ENCODE measurements at regions of chr2 and their contacts with region 1.

Region 1: GRCh38 chr2:21042958-21043743 is 722 bp downstream of the APOB start:
- DNase-seq: peak; percentile 5 to 55 (median 35)
- ATAC-seq: peak; percentile 63
- H3K4me3 ChIP-seq: no peak overlapping the region
- H3K4me3 Mint-ChIP-seq: peak overlapping the region in 8 of 10 donors; percentile 0 to 61 (median 21)
- H3K27ac ChIP-seq: no peak overlapping the region
- H3K27ac Mint-ChIP-seq: no peak overlapping the region
- H3K4me1 ChIP-seq: no peaks in the 10 kb centered on the region
- H3K4me1 Mint-ChIP-seq: peaks cover 3 to 8% (median 5%) of the 10 kb centered on the region in 7 donors
- H3K27me3 ChIP-seq: no peaks in the 10 kb centered on the region
- H3K27me3 Mint-ChIP-seq: peaks cover 19 to 55% (median 41%) of the 10 kb centered on the region in 5 donors

Region 2: DNA sequence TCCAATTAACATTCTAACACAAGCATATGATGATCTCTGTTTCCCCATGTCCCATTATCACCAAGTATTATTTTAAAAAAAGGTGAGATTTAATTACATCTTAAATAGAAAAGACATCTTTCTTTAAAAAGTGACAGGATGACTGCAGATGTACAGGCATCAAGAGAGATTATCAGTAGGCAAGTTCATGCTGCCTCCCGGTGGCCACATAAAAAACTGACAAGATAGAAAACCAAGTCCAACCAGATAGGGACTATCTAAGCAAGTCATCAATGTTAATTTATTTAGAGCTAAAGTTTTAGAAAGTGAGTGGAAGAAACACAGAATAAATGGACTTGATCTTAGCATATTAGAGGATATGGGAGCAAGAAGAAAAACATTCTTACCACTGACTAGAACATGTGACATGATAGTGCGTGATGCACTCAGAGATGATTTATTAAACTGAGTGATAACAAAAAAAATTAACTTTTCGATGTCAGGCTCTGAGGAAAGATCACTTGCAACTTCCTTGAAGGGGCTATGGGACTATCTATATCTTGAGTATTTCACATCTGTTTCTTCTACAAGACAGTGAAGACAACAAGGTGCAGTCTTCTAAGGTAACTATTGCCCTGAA is 75.3 kb after region 1 on chr2:
- CTCF ChIA-PET with region 1: interaction called, 3 read pairs
- POLR2A ChIA-PET with region 1: no interaction called
- intact Hi-C with region 1: loop called (anchors 1 kb)
- DNase-seq: peak in 1 of 9 donors; percentile 0
- ATAC-seq: no peak
- H3K4me3 ChIP-seq: no peak overlapping the region
- H3K4me3 Mint-ChIP-seq: no peak overlapping the region
- H3K27ac ChIP-seq: no peak overlapping the region
- H3K27ac Mint-ChIP-seq: no peak overlapping the region
- H3K4me1 ChIP-seq: no peaks in the 10 kb centered on the region
- H3K4me1 Mint-ChIP-seq: no peaks in the 10 kb centered on the region
- H3K27me3 ChIP-seq: no peaks in the 10 kb centered on the region
- H3K27me3 Mint-ChIP-seq: peaks cover 3 to 28% (median 13%) of the 10 kb centered on the region in 5 donors

Region 3: DNA sequence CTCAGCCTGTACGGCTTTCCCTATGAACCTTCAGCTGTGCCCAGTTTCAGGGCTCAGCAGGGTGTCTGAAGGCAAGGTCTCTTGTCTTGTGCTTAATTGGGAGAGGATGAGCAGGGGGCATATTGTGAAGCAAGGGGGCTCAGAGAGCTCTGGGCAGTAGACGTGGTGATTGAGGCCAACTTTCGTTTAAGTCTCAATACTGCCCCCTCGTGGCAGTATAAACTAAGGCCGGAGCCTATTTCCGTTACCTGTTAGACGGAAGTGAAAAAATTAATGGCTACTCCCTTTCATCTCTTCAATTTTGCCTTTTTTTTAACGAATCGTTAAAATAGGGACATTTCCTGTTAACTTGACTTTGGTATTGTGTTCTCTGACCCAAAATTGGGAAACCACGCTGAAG is 274.0 kb after region 1 on chr2:
- CTCF ChIA-PET with region 1: no interaction called
- POLR2A ChIA-PET with region 1: no interaction called
- intact Hi-C with region 1: loop called in 1 of 2 experiments (anchors 1 kb)
- DNase-seq: no peak
- ATAC-seq: peak; percentile 38
- H3K4me3 ChIP-seq: no peak overlapping the region
- H3K4me3 Mint-ChIP-seq: no peak overlapping the region
- H3K27ac ChIP-seq: no peak overlapping the region
- H3K27ac Mint-ChIP-seq: no peak overlapping the region
- H3K4me1 ChIP-seq: no peaks in the 10 kb centered on the region
- H3K4me1 Mint-ChIP-seq: peaks cover 0 to 1% (median 0%) of the 10 kb centered on the region in 7 donors
- H3K27me3 ChIP-seq: no peaks in the 10 kb centered on the region
- H3K27me3 Mint-ChIP-seq: peaks cover 0 to 12% (median 0%) of the 10 kb centered on the region in 5 donors

Measured in naive thymus-derived CD4-positive, alpha-beta T cell (primary cell).